Activated CD8-positive, alpha-beta T cell treated with anti-CD3 and anti-CD28 coated beads, Interleukin-2, amount 10 ng/mL, durations not matched to agents 7 days and 5 days (primary cell): ENCODE measurements at regions of chr3 and their contacts with region 1.

Region 1: GRCh38 chr3:172530566-172530965 is 7.3 kb upstream of the TNFSF10 start:
- DNase-seq: peak; percentile 54
- ATAC-seq: peak; percentile 79
- H3K4me3 Mint-ChIP-seq: peak overlapping the region; percentile 8
- H3K27ac Mint-ChIP-seq: peak overlapping the region; percentile 77
- H3K4me1 Mint-ChIP-seq: peaks cover 62% of the 10 kb centered on the region
- H3K27me3 Mint-ChIP-seq: no peaks in the 10 kb centered on the region

Region 2: GRCh38 chr3:172511783-172512762 is 18.5 kb before region 1 on chr3:
- CTCF ChIA-PET with region 1: interaction called, 15 read pairs
- POLR2A ChIA-PET with region 1: interaction called, 6 read pairs
- DNase-seq: peak; percentile 75
- ATAC-seq: peak; percentile 71
- H3K4me3 Mint-ChIP-seq: peak overlapping the region; percentile 68
- H3K27ac Mint-ChIP-seq: peak overlapping the region; percentile 90
- H3K4me1 Mint-ChIP-seq: peaks cover 88% of the 10 kb centered on the region
- H3K27me3 Mint-ChIP-seq: no peaks in the 10 kb centered on the region

Region 3: GRCh38 chr3:172580680-172581401 is 50.3 kb after region 1 on chr3:
- CTCF ChIA-PET with region 1: interaction called, 20 read pairs
- POLR2A ChIA-PET with region 1: interaction called, 7 read pairs
- DNase-seq: no peak
- ATAC-seq: peak; percentile 35
- H3K4me3 Mint-ChIP-seq: peak overlapping the region; percentile 67
- H3K27ac Mint-ChIP-seq: peak overlapping the region; percentile 92
- H3K4me1 Mint-ChIP-seq: peaks cover 97% of the 10 kb centered on the region
- H3K27me3 Mint-ChIP-seq: no peaks in the 10 kb centered on the region